PC-9 (cell line): ENCODE measurements at regions of chr11 and their contacts with region 1.

Region 1: GRCh38 chr11:83736689-83737088 is 450.5 kb upstream of the CCDC90B start:
- DNase-seq: no peak
- H3K4me3 ChIP-seq: no peak overlapping the region
- H3K27ac ChIP-seq: no peak overlapping the region
- H3K4me1 ChIP-seq: no peaks in the 10 kb centered on the region
- H3K27me3 ChIP-seq: no peaks in the 10 kb centered on the region
- CTCF ChIP-seq: no peak

Region 2: GRCh38 chr11:83574516-83574915 is 162.2 kb before region 1 on chr11:
- CTCF ChIA-PET with region 1: no interaction called
- POLR2A ChIA-PET with region 1: no interaction called
- intact Hi-C with region 1: no loop called
- DNase-seq: no peak
- H3K4me3 ChIP-seq: no peak overlapping the region
- H3K27ac ChIP-seq: no peak overlapping the region
- H3K4me1 ChIP-seq: no peaks in the 10 kb centered on the region
- H3K27me3 ChIP-seq: no peaks in the 10 kb centered on the region
- CTCF ChIP-seq: no peak

Region 3: DNA sequence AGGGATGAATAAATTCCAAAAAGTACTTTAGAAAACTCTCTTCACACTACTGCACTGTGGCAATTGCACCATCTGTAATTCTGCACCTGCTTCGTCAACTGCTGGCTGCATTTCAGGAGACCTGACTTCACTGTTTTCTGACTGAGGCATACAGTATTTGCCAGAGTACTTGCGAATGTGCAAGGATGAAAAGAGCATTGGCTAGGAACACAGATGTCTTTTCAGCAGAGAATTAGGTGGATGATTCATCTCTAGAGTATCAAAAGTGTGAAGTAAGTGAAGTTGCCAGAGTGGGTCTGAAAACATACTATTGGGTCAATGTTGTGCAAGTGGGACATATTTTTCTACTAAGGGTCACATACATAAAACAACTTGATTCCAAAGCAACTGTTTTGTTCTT is 23.0 kb before region 1 on chr11:
- CTCF ChIA-PET with region 1: interaction called, 11 read pairs
- POLR2A ChIA-PET with region 1: no interaction called
- intact Hi-C with region 1: no loop called
- DNase-seq: no peak
- H3K4me3 ChIP-seq: no peak overlapping the region
- H3K27ac ChIP-seq: no peak overlapping the region
- H3K4me1 ChIP-seq: no peaks in the 10 kb centered on the region
- H3K27me3 ChIP-seq: no peaks in the 10 kb centered on the region
- CTCF ChIP-seq: no peak

Region 4: GRCh38 chr11:83951474-83951873 is 214.8 kb after region 1 on chr11:
- CTCF ChIA-PET with region 1: no interaction called
- POLR2A ChIA-PET with region 1: no interaction called
- intact Hi-C with region 1: no loop called
- DNase-seq: no peak
- H3K4me3 ChIP-seq: no peak overlapping the region
- H3K27ac ChIP-seq: no peak overlapping the region
- H3K4me1 ChIP-seq: no peaks in the 10 kb centered on the region
- H3K27me3 ChIP-seq: no peaks in the 10 kb centered on the region
- CTCF ChIP-seq: no peak

Region 5: GRCh38 chr11:84036664-84037194 is 300.0 kb after region 1 on chr11:
- CTCF ChIA-PET with region 1: no interaction called
- POLR2A ChIA-PET with region 1: no interaction called
- intact Hi-C with region 1: no loop called
- DNase-seq: no peak
- H3K4me3 ChIP-seq: no peak overlapping the region
- H3K27ac ChIP-seq: no peak overlapping the region
- H3K4me1 ChIP-seq: no peaks in the 10 kb centered on the region
- H3K27me3 ChIP-seq: no peaks in the 10 kb centered on the region
- CTCF ChIP-seq: no peak